ENCODE measurements at regions of chr6 and their contacts with region 1.

Region 1: DNA sequence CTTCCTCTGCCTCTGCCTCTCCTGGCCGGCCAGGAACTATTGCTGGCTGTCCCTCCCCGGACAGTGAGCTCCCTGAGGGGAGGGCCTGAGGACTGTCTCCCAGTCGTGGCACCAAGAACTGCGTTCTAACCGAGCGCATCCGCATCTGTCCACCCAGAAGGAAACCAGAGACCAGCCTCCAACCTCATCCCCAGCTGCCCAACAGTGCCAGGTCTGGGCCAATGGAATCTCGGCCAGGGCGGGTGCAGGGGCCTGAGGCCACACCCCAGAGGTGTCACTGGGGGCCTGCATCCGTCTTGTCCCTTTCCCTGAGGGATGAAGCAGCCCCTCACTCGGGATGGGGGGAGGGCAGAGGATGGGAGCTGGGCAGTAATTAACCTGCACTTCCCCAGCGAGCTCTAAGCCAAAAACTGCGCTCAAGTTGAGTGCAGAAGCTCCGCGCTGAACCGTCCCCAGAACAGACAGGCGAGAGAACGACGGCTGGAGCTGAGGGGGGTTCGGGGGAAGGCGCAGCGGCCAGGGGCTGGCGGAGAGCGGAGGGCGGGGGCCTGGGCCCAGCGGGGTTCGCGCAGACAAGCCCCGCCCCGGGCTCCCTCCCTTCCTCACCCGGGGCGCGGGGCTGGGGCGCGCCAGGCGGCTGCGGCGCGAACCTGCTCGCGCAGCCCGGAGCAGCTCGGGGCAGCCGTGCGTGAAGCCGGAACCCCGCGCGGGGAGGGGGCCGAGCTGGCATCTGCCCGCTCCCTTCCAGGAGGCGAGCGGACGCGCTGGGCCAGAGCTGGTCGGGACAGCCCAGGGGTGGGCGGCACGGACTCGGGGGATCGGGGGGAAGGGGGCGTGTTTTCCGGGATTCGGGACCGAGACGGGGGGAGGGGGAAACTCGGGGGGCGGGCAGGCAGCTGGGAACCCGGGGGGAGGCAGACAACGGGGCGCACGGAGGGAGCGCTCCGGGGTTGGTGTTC is 1.4 kb downstream of the TFEB start:
- DNase-seq: peak; percentile 85
- ATAC-seq: peak; percentile 76

Region 2: DNA sequence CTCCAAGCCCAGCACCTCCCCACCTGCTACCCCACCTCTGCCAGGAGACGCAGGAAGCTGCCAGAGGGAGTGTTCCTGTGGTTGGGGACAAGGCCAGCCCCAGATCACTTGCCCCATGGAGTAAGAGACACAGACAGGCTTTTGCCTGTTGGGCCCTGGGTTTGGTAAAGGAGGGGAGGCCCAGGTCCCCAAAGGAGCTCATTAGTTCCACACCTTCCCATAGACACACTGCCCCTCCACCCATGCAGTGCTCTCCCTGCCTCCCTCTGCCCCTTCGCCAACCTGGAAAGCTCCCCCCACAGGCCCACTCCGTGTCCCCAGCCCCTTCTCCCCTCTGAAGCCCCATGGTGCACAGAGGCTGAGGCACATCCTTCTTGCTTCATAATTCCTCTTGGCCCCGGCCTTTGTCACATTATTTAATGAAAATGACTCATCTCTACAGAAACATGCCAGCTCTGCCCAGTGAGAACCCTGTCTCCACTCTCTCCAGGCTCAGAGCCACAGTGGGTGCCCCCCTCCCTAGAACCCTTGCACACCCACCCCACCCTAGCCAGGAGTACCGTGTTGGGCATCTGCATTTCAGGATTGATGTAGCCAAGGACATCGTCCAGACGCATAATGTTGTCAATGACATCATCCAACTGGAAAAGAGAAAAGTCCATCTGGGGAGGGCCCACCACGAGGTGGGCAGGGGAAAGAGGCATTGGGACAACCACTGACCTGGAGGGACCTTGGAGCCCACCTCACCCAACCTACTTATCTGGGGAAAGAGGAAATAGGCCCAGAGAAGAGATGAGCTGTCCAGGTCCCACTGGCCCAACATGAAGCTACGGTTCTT is 44.6 kb before region 1 on chr6:
- intact Hi-C with region 1: loop called (anchors 5 kb)
- DNase-seq: peak; percentile 60
- ATAC-seq: no peak

Region 3: GRCh38 chr6:42251911-42252637 is 518.1 kb after region 1 on chr6:
- intact Hi-C with region 1: no loop called
- DNase-seq: peak; percentile 83
- ATAC-seq: peak; percentile 87

Region 4: GRCh38 chr6:42599558-42599957 is 865.6 kb after region 1 on chr6:
- intact Hi-C with region 1: no loop called
- DNase-seq: no peak
- ATAC-seq: no peak